Prostate gland (tissue), 2 donors: ENCODE measurements at regions of chr1 and their contacts with region 1.

Region 1: DNA sequence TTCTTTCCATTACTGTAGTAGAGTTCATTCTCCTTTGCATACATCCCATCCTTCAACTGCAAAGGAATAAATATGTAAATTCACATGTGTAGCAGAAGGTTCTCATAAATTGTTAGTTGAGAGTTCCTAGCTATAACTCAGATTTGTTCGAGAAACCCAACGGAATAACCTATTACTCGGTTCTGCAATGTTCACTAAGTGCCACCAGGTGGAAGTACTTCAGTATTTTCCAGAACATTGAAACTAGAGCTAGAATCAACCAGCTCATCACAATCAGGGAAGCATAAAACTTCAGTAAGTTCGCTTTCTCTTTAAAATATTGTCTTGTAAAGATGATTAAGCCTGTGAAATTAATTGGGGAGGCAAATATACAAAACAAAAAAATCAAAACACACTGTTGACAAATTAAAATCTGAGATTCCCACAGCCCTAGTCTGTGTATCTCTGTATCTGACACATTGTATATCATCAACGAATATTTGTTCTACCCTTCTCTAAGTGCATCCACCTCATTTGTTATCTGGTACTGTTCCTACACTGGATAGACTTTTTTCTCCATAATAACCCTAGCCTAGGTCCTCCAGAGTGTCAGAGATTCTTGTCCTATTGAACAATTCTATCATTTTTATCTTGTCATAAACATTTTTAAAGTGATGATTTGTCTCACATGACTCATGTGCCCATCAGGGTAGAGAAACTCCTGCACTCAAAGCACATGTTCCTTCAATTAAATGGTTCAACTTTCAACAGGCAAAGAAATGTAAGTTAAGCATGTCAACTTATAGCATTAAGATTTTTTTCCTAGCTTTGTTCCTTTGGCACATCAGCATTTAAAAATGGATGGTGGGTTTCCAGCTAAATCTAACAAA is 31.9 kb downstream of the MROH9 start:
- DNase-seq: peak; percentile 10
- H3K4me3 ChIP-seq: no peak overlapping the region
- H3K27ac ChIP-seq: no peak overlapping the region
- H3K4me1 ChIP-seq: no peaks in the 10 kb centered on the region
- H3K27me3 ChIP-seq: no peaks in the 10 kb centered on the region
- CTCF ChIP-seq: peak in 3 of 4 experiments; percentile 51 to 79 (median 66)
- POLR2A ChIP-seq: no peak

Region 2: GRCh38 chr1:171226747-171227370 is 259.6 kb after region 1 on chr1:
- intact Hi-C with region 1: loop called (anchors 5 kb)
- DNase-seq: peak; percentile 60
- H3K4me3 ChIP-seq: no peak overlapping the region
- H3K27ac ChIP-seq: no peak overlapping the region
- H3K4me1 ChIP-seq: no peaks in the 10 kb centered on the region
- H3K27me3 ChIP-seq: no peaks in the 10 kb centered on the region
- CTCF ChIP-seq: peak; percentile 57 to 87 (median 83)
- POLR2A ChIP-seq: no peak

Region 3: DNA sequence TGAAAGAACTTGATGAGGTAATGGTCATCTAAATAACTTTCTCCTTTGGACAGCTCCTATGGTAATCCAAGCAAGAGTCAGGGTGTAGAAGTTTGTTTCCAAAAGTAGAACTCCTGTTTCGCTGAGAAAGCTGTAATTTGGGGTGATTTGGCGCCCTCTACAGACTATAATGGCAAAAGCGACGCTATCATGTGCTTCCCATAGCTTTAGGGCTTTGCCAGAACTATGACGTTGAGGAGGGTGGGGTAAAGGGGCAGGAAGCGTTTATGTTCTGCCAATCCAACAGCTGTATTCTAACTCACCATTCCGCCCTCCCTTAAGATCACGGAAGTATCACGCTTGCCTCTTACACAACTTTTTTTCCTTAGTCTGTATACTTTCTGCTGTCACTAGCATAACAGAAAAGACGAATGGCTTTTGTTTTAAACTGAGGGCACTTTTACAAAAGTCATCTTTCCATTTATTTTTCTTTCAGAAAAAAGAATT is 346.6 kb after region 1 on chr1 and contains the start of gene FMO4:
- intact Hi-C with region 1: loop called (anchors 2 kb)
- DNase-seq: peak; percentile 95
- H3K4me3 ChIP-seq: peak within 1 kb of the TSS in 1 of 2 donors; percentile 8
- H3K27ac ChIP-seq: peak within 1 kb of the TSS; percentile 42 to 53
- H3K4me1 ChIP-seq: no peaks in the 10 kb centered on the region
- H3K27me3 ChIP-seq: no peaks in the 10 kb centered on the region
- CTCF ChIP-seq: peak; percentile 67 to 94 (median 91)
- POLR2A ChIP-seq: no peak
- total RNA-seq, gene FMO4: 6.7 to 7.1 TPM